ENCODE measurements at regions of chr17 and their contacts with region 1.

Region 1: DNA sequence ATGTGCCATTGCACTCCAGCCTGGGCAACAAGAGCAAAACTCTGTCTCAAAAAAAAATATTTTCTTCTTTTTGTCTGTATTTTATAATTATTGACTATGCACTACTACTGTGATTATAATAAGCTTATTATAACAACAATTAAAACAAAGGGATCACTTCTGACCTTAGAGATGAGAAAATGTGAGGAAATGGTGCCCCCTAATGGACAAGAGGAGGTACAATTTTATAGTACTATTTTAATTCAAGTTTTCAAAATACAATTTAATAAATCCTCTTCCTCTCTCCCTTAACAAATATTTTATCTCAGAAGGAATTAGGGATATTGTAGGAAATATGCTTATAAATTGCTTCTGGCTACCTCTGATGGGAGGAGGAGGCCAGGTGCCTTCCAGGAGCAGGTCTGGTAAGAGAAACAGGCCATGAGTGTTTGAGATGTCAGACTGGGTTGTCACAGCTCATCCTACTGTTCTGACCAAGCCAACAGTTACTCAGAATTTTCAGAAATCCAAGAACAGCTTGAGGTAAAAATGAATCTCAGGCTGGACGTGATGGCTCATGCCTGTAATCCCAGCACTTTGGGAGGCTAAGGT is 14.0 kb downstream of the VPS53 start:
- DNase-seq: no peak

Region 2: DNA sequence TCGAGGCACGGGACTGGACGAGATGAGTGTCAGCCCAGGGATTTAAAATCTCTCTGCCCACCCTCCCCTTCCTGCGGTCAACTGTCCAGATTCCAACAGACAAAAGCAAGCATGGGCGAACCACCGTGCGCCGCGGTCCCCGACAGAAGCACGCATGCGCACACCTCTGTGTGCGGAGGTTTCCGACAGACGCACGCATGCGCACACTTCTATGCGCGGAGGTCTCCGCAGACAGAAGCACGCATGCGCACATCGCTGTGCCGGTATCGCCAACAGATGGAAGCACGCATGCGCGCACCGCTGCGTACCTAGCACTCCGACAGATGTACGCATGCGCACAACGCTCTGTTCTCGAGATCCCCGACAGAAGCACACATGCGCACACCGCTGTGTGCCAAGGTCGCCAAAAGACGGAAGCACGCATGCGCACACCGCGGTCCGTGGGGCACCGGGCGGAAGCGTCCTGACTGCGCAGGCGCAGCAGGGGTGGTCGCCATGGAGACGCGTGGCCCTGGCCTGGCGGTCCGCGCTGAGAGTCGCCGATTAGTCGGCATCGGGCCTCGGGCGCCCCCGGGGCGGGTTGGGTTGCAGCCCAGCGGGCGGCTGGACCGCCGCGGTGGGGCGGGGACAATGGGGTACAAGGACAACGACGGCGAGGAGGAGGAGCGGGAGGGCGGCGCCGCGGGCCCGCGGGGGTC is 290.6 kb before region 1 on chr17:
- intact Hi-C with region 1: loop called (anchors 2 kb)
- DNase-seq: peak; percentile 93 to 99 (median 95)